Natural killer cell (primary cell): ENCODE measurements at regions of chr16 and their contacts with region 1.

Region 1: GRCh38 chr16:4253394-4254150 is 11.7 kb upstream of the SRL start:
- DNase-seq: peak; percentile 97 to 100
- ATAC-seq: peak; percentile 92 to 99 (median 92)
- H3K4me3 ChIP-seq: peak overlapping the region; percentile 69
- H3K4me3 Mint-ChIP-seq: peak overlapping the region; percentile 94
- H3K27ac ChIP-seq: peak overlapping the region; percentile 74
- H3K27ac Mint-ChIP-seq: peak overlapping the region; percentile 89 to 96
- H3K4me1 ChIP-seq: peaks cover 16% of the 10 kb centered on the region
- H3K4me1 Mint-ChIP-seq: peaks cover 0 to 9% of the 10 kb centered on the region in 2 donors
- H3K27me3 ChIP-seq: no peaks in the 10 kb centered on the region
- H3K27me3 Mint-ChIP-seq: no peaks in the 10 kb centered on the region
- CTCF ChIP-seq: no peak

Region 2: GRCh38 chr16:3938848-3939624 is 314.5 kb before region 1 on chr16:
- intact Hi-C with region 1: loop called (anchors 1 kb)
- DNase-seq: peak; percentile 68 to 83
- ATAC-seq: peak; percentile 69 to 92 (median 88)
- H3K4me3 ChIP-seq: peak overlapping the region; percentile 10
- H3K4me3 Mint-ChIP-seq: peak overlapping the region; percentile 49
- H3K27ac ChIP-seq: no peak overlapping the region
- H3K27ac Mint-ChIP-seq: no peak overlapping the region
- H3K4me1 ChIP-seq: peaks cover 11% of the 10 kb centered on the region
- H3K4me1 Mint-ChIP-seq: peaks cover 0 to 4% of the 10 kb centered on the region in 2 donors
- H3K27me3 ChIP-seq: no peaks in the 10 kb centered on the region
- H3K27me3 Mint-ChIP-seq: peaks cover 0 to 2% of the 10 kb centered on the region in 2 donors
- CTCF ChIP-seq: peak; percentile 96

Region 3: DNA sequence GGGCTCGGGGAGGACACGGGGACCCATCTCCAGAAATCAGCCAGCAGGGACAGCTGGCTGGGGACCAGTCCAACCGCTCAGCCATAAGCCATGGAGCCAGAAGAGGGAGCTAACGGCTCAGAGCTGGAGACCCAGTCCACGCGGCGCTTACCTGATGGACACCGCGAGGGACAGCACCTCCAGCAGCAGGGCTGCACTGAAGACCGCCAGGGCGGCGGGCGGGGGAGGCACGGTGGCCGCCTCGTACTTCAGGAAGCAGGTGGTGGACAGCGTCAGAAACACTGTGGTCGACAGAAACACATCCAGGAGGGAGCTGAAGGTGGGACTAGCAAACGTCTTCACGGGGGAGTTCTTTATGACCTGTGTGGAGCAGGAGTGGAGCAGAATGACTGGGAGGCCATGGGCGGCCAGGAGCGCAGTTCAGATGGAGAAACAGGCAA is 270.5 kb before region 1 on chr16:
- intact Hi-C with region 1: loop called (anchors 10 kb)
- DNase-seq: peak; percentile 31 to 67
- ATAC-seq: peak; percentile 68 to 90 (median 80)
- H3K4me3 ChIP-seq: no peak overlapping the region
- H3K4me3 Mint-ChIP-seq: peak overlapping the region; percentile 14
- H3K27ac ChIP-seq: no peak overlapping the region
- H3K27ac Mint-ChIP-seq: peak overlapping the region; percentile 50 to 64
- H3K4me1 ChIP-seq: peaks cover 10% of the 10 kb centered on the region
- H3K4me1 Mint-ChIP-seq: peaks cover 18 to 19% of the 10 kb centered on the region in 2 donors
- H3K27me3 ChIP-seq: no peaks in the 10 kb centered on the region
- H3K27me3 Mint-ChIP-seq: no peaks in the 10 kb centered on the region
- CTCF ChIP-seq: peak; percentile 55

Region 4: DNA sequence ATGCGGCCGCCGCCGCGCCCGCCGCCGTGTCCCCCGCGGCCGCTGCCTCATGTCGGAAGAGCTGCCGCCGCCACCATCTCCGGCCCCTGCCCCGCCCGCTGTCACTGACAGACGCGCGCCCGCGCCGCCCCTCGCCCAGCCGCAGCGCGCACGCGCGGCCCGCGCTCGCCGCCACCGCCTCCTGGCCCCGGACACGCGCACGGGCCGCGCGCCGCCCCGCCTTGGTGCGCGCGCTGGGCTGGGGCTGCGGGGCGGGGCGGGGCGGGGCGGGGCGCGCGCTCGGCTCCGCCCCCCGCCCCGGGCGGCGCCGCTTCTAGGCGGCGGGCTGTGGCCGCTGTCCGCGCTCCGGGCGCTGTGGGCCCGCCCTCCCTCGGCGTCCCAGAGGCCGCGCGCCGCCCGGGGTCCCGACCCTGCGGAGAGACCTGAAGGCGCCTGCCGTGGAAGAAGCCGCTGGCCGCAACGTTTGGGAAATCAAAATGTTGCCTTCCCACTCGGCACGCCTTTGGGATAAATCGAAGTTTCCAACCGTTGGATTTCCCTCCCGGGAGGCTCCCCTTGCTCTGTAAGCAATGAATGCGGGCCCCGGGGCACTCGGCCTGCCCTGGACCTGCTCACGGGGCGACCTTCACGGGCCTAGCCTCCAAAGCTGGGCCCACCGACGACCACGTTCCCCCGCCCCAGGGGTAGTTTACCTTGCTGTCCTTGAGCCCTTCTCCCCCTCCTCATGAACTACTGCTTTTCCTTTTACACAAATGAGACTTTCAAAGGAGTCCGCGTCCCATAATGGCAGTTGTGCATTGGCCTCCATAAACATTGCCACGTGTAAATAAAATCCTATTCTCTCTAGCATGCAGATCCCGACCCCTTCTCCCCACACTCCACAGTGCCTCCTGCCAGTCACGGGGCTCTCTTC is 137.0 kb before region 1 on chr16 and contains the start of gene ADCY9:
- intact Hi-C with region 1: loop called (anchors 5 kb)
- DNase-seq: peak; percentile 80 to 93
- ATAC-seq: peak; percentile 77 to 92 (median 78)
- H3K4me3 ChIP-seq: peak within 1 kb of the TSS; percentile 56
- H3K4me3 Mint-ChIP-seq: peak within 1 kb of the TSS; percentile 88
- H3K27ac ChIP-seq: peak within 1 kb of the TSS; percentile 24
- H3K27ac Mint-ChIP-seq: peak within 1 kb of the TSS; percentile 71 to 88
- H3K4me1 ChIP-seq: peaks cover 41% of the 10 kb centered on the region
- H3K4me1 Mint-ChIP-seq: peaks cover 42 to 44% of the 10 kb centered on the region in 2 donors
- H3K27me3 ChIP-seq: no peaks in the 10 kb centered on the region
- H3K27me3 Mint-ChIP-seq: no peaks in the 10 kb centered on the region
- CTCF ChIP-seq: no peak
- total RNA-seq, gene ADCY9: 28.0 to 52.4 (median 38.3) TPM

Region 5: DNA sequence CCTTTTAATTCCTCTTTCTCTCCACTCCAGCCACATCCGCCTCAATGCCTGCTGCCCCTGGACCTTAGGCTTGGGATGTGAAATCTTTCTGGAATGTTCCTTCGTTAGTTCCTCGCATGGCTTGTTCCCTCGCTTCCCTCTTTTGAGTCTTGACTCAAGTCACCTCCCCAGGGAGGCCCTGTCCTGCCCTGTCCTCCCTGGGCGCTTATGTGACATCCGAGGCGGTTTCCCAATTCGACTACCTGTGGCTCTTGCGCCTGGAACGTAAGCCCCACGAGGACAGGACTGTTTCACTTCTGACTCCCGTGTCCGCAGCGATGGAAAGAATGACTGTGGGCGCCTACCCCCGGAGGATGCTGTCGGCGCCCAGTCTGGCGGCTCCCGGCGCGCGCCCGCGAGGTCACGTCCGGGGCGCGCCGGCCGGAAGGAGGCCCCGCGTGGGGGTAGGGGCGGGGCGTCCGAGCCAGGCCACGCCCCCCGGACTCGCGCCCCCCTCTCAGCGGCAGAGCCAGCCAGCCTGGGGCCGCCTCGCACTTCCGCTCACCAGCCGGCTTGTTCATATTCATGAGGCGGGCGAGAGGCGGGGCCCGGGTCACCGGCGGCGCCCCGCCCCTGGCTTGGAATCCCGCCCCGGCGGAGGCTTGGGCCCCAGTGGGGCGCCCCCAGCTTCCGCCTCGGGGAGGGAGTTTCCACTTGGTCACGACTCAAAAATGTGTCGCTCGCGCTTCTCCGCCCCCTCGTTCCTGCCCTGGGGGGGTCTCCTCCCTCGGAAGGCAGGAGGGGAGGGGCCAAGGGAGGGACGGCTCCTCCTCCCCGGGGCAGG is 53.9 kb after region 1 on chr16:
- intact Hi-C with region 1: loop called (anchors 1 kb)
- DNase-seq: peak; percentile 98
- ATAC-seq: peak; percentile 88 to 97 (median 89)
- H3K4me3 ChIP-seq: peak overlapping the region; percentile 67
- H3K4me3 Mint-ChIP-seq: peak overlapping the region; percentile 96
- H3K27ac ChIP-seq: peak overlapping the region; percentile 92
- H3K27ac Mint-ChIP-seq: peak overlapping the region; percentile 97 to 99
- H3K4me1 ChIP-seq: peaks cover 23% of the 10 kb centered on the region
- H3K4me1 Mint-ChIP-seq: peaks cover 12 to 19% of the 10 kb centered on the region in 2 donors
- H3K27me3 ChIP-seq: no peaks in the 10 kb centered on the region
- H3K27me3 Mint-ChIP-seq: no peaks in the 10 kb centered on the region
- CTCF ChIP-seq: no peak

Region 6: DNA sequence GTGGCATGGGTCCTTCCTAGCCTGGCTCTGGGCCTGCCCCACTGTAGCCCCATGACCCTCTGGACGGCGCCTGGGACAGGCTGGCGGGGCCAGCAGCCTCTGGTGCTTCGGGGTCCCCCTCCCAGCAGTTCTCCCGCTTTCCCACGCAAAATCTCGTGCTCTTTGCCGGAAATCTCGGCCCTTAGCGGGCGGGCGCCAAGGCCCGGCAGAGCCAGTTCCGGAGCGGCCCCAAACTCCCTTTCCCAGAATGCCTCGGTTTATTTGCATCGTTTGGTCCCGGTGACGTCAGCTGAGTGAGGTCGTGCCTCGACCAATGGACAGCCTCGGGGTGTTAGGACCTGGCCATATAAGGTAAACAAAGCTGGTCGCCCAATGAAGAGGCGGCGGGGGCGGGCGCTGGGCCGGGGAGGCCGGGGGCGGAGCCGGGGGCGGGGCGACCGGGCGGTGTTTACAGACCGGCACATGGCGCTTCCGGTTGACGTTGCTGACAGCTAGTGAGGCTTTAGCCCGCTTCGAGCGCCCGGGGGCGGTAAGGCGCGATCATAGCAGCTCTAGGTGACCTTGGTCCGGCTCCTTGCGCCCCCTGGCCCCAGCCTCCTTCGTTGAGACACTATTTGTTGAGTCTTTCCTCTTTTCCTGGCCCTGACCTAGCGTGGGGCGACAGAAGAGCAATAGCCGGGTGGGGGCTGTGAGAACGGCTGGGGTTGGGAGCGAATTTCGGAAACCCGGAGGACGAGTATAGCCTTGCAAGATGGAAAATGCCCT is 362.7 kb after region 1 on chr16:
- intact Hi-C with region 1: loop called (anchors 10 kb)
- DNase-seq: peak; percentile 96 to 100
- ATAC-seq: peak; percentile 89 to 97 (median 90)
- H3K4me3 ChIP-seq: peak overlapping the region; percentile 49
- H3K4me3 Mint-ChIP-seq: peak overlapping the region; percentile 93
- H3K27ac ChIP-seq: peak overlapping the region; percentile 90
- H3K27ac Mint-ChIP-seq: peak overlapping the region; percentile 96 to 99
- H3K4me1 ChIP-seq: peaks cover 43% of the 10 kb centered on the region
- H3K4me1 Mint-ChIP-seq: peaks cover 14 to 28% of the 10 kb centered on the region in 2 donors
- H3K27me3 ChIP-seq: no peaks in the 10 kb centered on the region
- H3K27me3 Mint-ChIP-seq: no peaks in the 10 kb centered on the region
- CTCF ChIP-seq: peak; percentile 26

Region 7: DNA sequence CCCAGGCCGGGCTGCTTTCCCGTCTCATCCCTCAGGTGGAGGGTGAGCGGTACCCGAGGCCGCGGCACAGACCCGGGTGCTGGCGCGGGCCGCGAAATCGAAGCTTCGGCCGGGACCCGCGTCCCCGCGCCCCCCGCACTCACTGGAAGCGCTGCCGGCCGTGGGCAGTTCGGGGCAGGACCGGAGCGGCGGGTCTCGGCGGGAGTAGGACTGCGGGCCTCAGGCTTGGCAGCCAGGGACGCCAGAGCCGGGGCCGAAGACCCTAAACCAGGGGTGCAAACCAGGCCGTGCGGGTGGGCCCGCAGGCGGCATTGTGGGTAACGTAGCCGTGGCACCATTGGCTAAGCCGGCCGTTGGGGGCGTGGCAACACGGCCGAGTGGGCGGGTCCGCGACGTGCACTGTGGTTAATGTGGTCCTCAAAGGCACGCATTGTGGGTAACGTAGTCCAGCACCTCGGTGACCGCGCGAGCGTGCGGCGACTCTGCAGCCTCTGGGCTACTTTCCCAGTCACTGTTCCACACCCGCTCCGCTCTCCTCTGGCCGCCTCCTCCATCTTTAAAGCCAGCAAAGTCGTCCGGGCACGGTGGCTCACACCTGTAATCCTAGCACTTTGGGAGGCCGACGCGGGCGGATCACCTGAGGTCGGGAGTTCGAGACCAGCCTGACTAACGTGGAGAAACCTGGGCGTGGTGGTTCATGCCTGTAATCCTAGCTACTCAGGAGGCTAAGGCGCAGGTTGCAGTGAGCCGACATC is 513.5 kb after region 1 on chr16 and contains the start of gene ZNF500:
- intact Hi-C with region 1: loop called (anchors 5 kb)
- DNase-seq: peak; percentile 95 to 96
- ATAC-seq: peak; percentile 93 to 97 (median 97)
- H3K4me3 ChIP-seq: peak within 1 kb of the TSS; percentile 69
- H3K4me3 Mint-ChIP-seq: peak within 1 kb of the TSS; percentile 92
- H3K27ac ChIP-seq: peak within 1 kb of the TSS; percentile 73
- H3K27ac Mint-ChIP-seq: peak within 1 kb of the TSS; percentile 86 to 88
- H3K4me1 ChIP-seq: peaks cover 38% of the 10 kb centered on the region
- H3K4me1 Mint-ChIP-seq: peaks cover 30 to 34% of the 10 kb centered on the region in 2 donors
- H3K27me3 ChIP-seq: no peaks in the 10 kb centered on the region
- H3K27me3 Mint-ChIP-seq: no peaks in the 10 kb centered on the region
- CTCF ChIP-seq: no peak
- total RNA-seq, gene ZNF500: 11.4 to 20.3 (median 13.0) TPM